Panc1 (cell line): ENCODE measurements at regions of chr3 and their contacts with region 1.

Region 1: DNA sequence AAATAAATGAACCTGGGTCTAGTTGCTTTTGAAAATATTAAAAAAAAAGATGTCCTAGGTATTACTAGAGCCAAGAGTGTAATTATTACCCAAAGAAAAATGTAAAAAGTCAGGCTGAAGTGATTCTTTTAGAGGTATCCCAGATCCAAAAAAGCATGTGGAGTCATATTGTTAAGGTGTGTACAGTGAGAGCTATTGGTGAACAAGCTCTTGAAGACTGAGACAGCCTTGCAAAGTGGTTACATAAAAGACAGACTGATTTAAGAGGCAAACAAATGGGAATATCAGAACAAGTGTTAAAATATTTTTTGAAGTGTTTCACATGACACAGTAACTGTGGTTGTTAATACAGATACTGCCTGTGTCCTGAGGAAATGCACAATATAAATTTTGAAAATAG is 624.5 kb downstream of the PLOD2 start:
- DNase-seq: no peak
- ATAC-seq: no peak
- H3K4me3 ChIP-seq: no peak overlapping the region
- H3K27ac ChIP-seq: no peak overlapping the region
- H3K4me1 ChIP-seq: no peaks in the 10 kb centered on the region
- H3K27me3 ChIP-seq: no peaks in the 10 kb centered on the region
- CTCF ChIP-seq: no peak

Region 2: DNA sequence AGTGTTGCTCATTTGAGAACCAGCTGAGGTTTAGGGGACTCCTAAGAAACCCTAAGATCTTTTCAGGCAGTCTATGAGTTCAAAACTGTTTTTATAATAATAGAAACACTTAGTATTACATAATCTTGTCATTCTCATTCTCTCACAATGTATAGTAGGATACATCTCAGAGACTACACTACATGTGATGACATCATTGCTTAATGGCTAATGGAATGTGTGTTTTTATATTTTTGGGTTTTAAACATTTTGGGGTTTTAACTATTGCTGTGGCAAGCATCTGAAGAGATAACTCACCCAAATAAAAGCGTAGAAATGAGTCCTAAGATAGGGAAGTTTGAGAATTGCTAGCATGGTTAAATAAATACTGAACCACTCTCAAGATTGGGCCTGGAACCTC is 35.2 kb before region 1 on chr3:
- CTCF ChIA-PET with region 1: no interaction called
- POLR2A ChIA-PET with region 1: no interaction called
- in situ Hi-C with region 1: no loop called
- intact Hi-C with region 1: no loop called
- DNase-seq: no peak
- ATAC-seq: no peak
- H3K4me3 ChIP-seq: no peak overlapping the region
- H3K27ac ChIP-seq: no peak overlapping the region
- H3K4me1 ChIP-seq: no peaks in the 10 kb centered on the region
- H3K27me3 ChIP-seq: no peaks in the 10 kb centered on the region
- CTCF ChIP-seq: no peak

Region 3: GRCh38 chr3:145698250-145698649 is 161.8 kb after region 1 on chr3:
- CTCF ChIA-PET with region 1: no interaction called
- POLR2A ChIA-PET with region 1: no interaction called
- in situ Hi-C with region 1: no loop called
- intact Hi-C with region 1: loop called (anchors 5 kb)
- DNase-seq: no peak
- ATAC-seq: no peak
- H3K4me3 ChIP-seq: no peak overlapping the region
- H3K27ac ChIP-seq: no peak overlapping the region
- H3K4me1 ChIP-seq: no peaks in the 10 kb centered on the region
- H3K27me3 ChIP-seq: no peaks in the 10 kb centered on the region
- CTCF ChIP-seq: no peak